Activated B cell treated with CpG ODN at 0.5 μM for 24 hours (primary cell): ENCODE measurements at regions of chr6 and their contacts with region 1.

Region 1: GRCh38 chr6:42978839-42979522 is at the start of gene PEX6:
- DNase-seq: peak; percentile 74
- ATAC-seq: peak; percentile 94
- H3K4me3 Mint-ChIP-seq: peak within 1 kb of the TSS; percentile 93
- H3K27ac Mint-ChIP-seq: peak within 1 kb of the TSS; percentile 95
- H3K4me1 Mint-ChIP-seq: peaks cover 36% of the 10 kb centered on the region
- H3K27me3 Mint-ChIP-seq: no peaks in the 10 kb centered on the region
- CTCF ChIP-seq: no peak
- total RNA-seq, gene PEX6: 11.8 and 13.2 TPM in 2 replicates

Region 2: GRCh38 chr6:41326092-41326491 is 1652.9 kb before region 1 on chr6:
- CTCF ChIA-PET with region 1: no interaction called
- POLR2A ChIA-PET with region 1: interaction called, 10 read pairs
- intact Hi-C with region 1: no loop called
- DNase-seq: no peak
- ATAC-seq: no peak
- H3K4me3 Mint-ChIP-seq: no peak overlapping the region
- H3K27ac Mint-ChIP-seq: no peak overlapping the region
- H3K4me1 Mint-ChIP-seq: peaks cover 1% of the 10 kb centered on the region
- H3K27me3 Mint-ChIP-seq: peaks cover 14% of the 10 kb centered on the region
- CTCF ChIP-seq: no peak

Region 3: DNA sequence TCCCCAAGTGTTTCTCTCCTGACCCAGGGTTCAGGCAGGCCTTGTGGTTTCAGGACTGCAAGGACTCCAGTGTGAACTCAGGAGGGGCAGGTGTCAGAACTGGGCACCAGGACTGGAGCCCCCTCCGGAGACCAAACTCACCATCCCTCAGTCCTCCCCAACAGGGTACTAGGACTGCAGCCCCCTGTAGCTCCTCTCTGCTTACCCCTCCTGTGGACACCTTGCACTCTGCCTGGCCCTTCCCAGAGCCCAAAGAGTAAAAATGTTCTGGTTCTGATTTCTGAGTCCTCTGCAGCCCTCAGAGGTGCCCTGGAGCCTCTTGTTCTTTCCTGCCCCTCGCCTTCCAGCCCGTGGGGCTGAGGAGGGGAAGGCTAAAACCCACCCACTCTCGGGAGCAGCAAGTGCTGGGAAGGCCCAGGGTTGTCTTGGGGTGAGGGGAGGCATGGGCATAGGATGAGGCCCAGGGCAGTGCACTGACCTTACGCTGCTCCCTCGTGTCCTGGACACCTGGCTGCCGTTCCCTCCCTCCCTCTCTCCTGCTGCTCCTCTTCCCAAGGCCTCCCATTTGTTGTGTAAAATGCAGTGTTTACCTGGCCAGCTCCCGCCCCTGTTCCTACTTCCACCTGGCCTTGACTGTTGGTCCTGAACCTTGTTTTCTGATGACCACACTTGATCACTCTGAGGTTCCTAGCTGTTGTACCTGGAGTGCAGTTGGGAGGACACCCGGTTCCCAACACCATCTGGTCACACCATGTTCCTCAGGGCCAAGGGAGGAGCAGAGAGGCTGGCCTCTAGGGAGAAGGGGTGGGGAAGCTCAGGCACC is 39.8 kb before region 1 on chr6:
- CTCF ChIA-PET with region 1: no interaction called
- POLR2A ChIA-PET with region 1: interaction called, 12 read pairs
- intact Hi-C with region 1: no loop called
- DNase-seq: no peak
- ATAC-seq: no peak
- H3K4me3 Mint-ChIP-seq: no peak overlapping the region
- H3K27ac Mint-ChIP-seq: no peak overlapping the region
- H3K4me1 Mint-ChIP-seq: peaks cover 28% of the 10 kb centered on the region
- H3K27me3 Mint-ChIP-seq: no peaks in the 10 kb centered on the region
- CTCF ChIP-seq: no peak

Region 4: DNA sequence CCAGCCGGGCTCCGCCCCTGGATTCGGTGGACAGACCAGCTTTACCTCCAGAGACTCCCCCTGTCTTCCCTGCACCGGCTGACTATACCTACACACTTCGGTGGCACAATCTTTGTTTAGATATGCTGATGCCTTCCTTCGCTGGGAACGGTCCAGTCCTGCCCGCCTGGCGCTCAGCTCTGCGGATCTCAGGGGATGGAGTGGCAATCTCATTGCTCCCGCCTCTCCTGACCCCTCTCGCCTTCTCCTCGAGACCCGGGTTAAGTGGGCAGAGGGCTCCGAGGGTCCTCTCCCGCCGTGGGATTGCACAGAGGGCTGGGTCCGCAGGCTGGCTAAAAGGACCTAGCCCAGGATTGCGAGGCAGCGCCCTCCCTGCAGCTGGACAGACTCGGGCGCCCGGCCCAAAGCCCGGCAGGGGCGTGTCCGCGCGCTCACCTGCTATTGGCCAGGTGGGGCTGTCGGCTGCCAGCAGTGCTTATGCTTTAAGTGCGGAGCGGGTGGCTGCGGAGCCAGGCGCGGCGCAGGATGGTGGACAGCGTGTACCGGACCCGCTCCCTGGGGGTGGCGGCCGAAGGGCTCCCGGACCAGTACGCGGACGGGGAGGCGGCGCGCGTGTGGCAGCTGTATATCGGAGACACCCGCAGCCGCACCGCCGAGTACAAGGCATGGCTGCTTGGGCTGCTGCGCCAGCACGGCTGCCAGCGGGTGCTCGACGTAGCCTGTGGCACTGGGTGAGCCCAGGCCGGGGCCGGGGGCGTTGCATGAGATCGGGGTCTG is 18.6 kb before region 1 on chr6 and contains the start of gene GNMT:
- CTCF ChIA-PET with region 1: no interaction called
- POLR2A ChIA-PET with region 1: interaction called, 3 read pairs
- intact Hi-C with region 1: loop called (anchors 2 kb)
- DNase-seq: peak; percentile 47
- ATAC-seq: peak; percentile 83
- H3K4me3 Mint-ChIP-seq: peak within 1 kb of the TSS; percentile 70
- H3K27ac Mint-ChIP-seq: peak within 1 kb of the TSS; percentile 7
- H3K4me1 Mint-ChIP-seq: peaks cover 14% of the 10 kb centered on the region
- H3K27me3 Mint-ChIP-seq: no peaks in the 10 kb centered on the region
- CTCF ChIP-seq: no peak
- total RNA-seq, gene GNMT: 1.7 and 2.3 TPM in 2 replicates

Region 5: GRCh38 chr6:43021270-43022047 is 42.5 kb after region 1 on chr6 and contains the start of gene RRP36:
- CTCF ChIA-PET with region 1: no interaction called
- POLR2A ChIA-PET with region 1: interaction called, 15 read pairs
- intact Hi-C with region 1: no loop called
- DNase-seq: peak; percentile 67
- ATAC-seq: peak; percentile 89
- H3K4me3 Mint-ChIP-seq: peak within 1 kb of the TSS; percentile 97
- H3K27ac Mint-ChIP-seq: peak within 1 kb of the TSS; percentile 84
- H3K4me1 Mint-ChIP-seq: peaks cover 20% of the 10 kb centered on the region
- H3K27me3 Mint-ChIP-seq: no peaks in the 10 kb centered on the region
- CTCF ChIP-seq: no peak
- total RNA-seq, gene RRP36: 51.7 and 53.9 TPM in 2 replicates